ENCODE measurements at regions of chr14 and their contacts with region 1.

Region 1: GRCh38 chr14:30375296-30375892 is 183.6 kb upstream of the G2E3 start:
- DNase-seq: peak; percentile 68
- H3K4me3 ChIP-seq: no peak overlapping the region
- H3K27ac ChIP-seq: no peak overlapping the region
- H3K4me1 ChIP-seq: no peaks in the 10 kb centered on the region
- H3K27me3 ChIP-seq: no peaks in the 10 kb centered on the region
- CTCF ChIP-seq: peak; percentile 80 to 86
- POLR2A ChIP-seq: no peak

Region 2: GRCh38 chr14:30443368-30444007 is 68.1 kb after region 1 on chr14:
- CTCF ChIA-PET with region 1: interaction called, 27 read pairs
- POLR2A ChIA-PET with region 1: no interaction called
- dilution Hi-C with region 1: no loop called
- intact Hi-C with region 1: loop called (anchors 5 kb)
- DNase-seq: peak; percentile 2
- H3K4me3 ChIP-seq: no peak overlapping the region
- H3K27ac ChIP-seq: no peak overlapping the region
- H3K4me1 ChIP-seq: no peaks in the 10 kb centered on the region
- H3K27me3 ChIP-seq: peaks cover 0 to 5% of the 10 kb centered on the region in 2 experiments
- CTCF ChIP-seq: no peak
- POLR2A ChIP-seq: no peak

Region 3: DNA sequence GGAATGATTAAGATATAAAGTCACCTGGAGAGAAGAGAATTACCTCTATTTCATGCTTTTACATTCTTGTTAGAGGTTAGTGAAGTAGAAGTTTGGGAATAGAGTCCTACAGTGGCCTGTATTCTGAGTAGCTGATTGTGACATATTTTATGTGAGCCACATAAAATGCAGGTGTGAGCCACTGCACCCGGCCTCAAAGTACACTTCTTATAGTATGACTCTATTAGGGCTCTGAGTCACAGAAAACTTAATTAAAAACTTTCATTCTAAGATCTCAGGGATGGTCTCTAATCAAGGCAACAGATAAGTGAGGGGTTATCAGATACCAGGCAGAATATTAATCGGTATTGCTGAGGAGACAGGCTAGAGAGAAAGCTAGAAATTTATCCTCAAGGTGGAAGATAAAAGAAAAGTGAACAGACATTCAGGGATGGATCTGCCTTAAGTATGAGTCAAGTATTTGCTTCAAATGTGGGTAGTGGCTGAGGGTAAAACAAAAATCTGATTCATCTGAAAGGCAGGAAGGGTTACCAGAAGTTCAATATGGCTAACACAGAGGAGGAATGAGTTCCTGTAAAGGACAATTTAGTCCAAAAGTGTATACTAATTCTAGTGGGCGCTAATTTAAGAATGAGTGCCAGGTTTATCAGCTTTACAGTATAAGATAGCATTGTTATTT is 178.1 kb after region 1 on chr14:
- CTCF ChIA-PET with region 1: no interaction called
- POLR2A ChIA-PET with region 1: no interaction called
- dilution Hi-C with region 1: no loop called
- intact Hi-C with region 1: no loop called
- DNase-seq: no peak
- H3K4me3 ChIP-seq: no peak overlapping the region
- H3K27ac ChIP-seq: no peak overlapping the region
- H3K4me1 ChIP-seq: peaks cover 3% of the 10 kb centered on the region
- H3K27me3 ChIP-seq: peaks cover 5 to 13% of the 10 kb centered on the region in 2 experiments
- CTCF ChIP-seq: no peak
- POLR2A ChIP-seq: no peak